ENCODE measurements at regions of chr9 and their contacts with region 1.

Region 1: GRCh38 chr9:112572416-112572815 is 85.8 kb downstream of the KIAA1958 start:
- DNase-seq: no peak
- ATAC-seq: no peak
- H3K4me3 ChIP-seq: no peak overlapping the region
- H3K4me3 Mint-ChIP-seq: no peak overlapping the region
- H3K27ac ChIP-seq: no peak overlapping the region
- H3K27ac Mint-ChIP-seq: no peak overlapping the region
- H3K4me1 ChIP-seq: no peaks in the 10 kb centered on the region
- H3K4me1 Mint-ChIP-seq: peaks cover 0 to 7% (median 0%) of the 10 kb centered on the region in 3 donors
- H3K27me3 ChIP-seq: no peaks in the 10 kb centered on the region
- H3K27me3 Mint-ChIP-seq: no peaks in the 10 kb centered on the region

Region 2: GRCh38 chr9:112559629-112560413 is 12.6 kb before region 1 on chr9:
- CTCF ChIA-PET with region 1: no interaction called
- POLR2A ChIA-PET with region 1: interaction called in 1 of 2 experiments, 14 read pairs
- DNase-seq: no peak
- ATAC-seq: no peak
- H3K4me3 ChIP-seq: no peak overlapping the region
- H3K4me3 Mint-ChIP-seq: no peak overlapping the region
- H3K27ac ChIP-seq: no peak overlapping the region
- H3K27ac Mint-ChIP-seq: no peak overlapping the region
- H3K4me1 ChIP-seq: no peaks in the 10 kb centered on the region
- H3K4me1 Mint-ChIP-seq: peaks cover 0 to 8% (median 2%) of the 10 kb centered on the region in 3 donors
- H3K27me3 ChIP-seq: no peaks in the 10 kb centered on the region
- H3K27me3 Mint-ChIP-seq: no peaks in the 10 kb centered on the region

Region 3: DNA sequence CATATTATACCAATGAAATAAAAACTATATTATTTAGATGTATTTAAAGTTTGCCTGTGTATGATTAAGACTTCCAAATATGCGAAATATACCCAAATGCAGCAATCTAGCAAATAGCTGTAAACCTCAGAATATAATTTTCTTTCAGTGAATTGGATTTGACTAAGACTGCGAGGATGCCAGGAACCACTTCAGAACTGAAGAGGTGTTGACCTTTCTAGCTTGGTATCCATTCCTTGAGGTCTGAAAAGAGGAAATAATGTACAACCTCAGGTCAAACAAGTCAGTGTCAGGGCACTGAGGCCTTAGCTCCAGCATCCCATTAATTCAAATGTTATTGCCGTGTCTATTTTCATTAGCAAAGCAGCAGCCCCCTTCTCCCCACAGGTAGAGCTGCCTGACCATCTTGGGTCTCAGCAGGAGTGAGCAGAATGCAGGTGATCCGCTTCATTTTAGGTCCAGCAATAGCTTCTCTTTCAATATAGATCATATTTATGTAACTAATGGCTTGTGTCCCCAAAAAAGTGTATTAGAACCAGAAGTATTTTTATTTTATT is 14.3 kb after region 1 on chr9:
- CTCF ChIA-PET with region 1: no interaction called
- POLR2A ChIA-PET with region 1: no interaction called
- DNase-seq: no peak
- ATAC-seq: no peak
- H3K4me3 ChIP-seq: no peak overlapping the region
- H3K4me3 Mint-ChIP-seq: no peak overlapping the region
- H3K27ac ChIP-seq: no peak overlapping the region
- H3K27ac Mint-ChIP-seq: no peak overlapping the region
- H3K4me1 ChIP-seq: no peaks in the 10 kb centered on the region
- H3K4me1 Mint-ChIP-seq: peaks cover 0 to under 1% (median 0%) of the 10 kb centered on the region in 3 donors
- H3K27me3 ChIP-seq: no peaks in the 10 kb centered on the region
- H3K27me3 Mint-ChIP-seq: no peaks in the 10 kb centered on the region

Measured in T-cell (primary cell).